ENCODE measurements at regions of chr18 and their contacts with region 1.

Region 1: DNA sequence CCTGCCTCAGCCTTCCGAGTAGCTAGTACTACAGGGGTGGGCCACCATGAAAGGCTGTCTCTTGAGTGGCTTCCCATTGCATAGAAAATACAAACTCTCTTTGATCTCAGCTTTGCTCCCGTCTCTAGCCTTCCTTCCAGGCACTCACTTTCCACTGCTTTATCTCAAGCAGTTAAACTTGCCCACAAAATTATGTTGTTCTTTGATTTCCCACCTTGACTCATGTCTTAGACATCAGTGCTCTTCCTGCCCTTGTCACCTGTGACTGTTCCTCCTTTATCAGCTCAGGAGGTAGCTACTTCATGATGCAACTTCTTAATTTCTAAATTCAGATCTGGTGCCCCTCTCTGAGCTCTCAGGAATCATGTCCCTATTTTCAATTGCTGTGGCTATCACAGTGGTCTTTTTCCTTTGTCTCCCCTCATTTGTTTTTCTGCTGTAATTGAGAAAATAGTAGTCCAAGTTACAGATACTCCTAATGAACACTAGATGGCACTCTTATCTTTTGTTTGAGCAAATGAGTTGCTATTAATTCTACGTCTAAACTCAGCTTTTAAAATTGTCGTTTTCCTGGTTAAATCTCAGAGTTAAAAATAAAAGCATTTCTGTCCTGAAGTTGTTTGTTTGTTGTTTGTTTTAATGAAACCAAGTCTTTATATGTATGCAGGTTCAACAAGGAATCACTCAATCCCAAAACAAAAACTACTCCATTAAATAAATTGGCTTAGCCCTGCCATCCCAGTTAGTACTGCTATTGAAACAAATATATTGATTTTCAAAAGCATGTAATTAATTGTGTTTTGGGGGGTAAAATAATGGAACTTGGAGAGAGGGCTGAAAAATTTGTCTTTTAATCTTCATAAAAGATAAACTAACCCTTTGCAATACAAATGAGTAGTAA is 46.9 kb upstream of the GREB1L start:
- DNase-seq: no peak
- ATAC-seq: no peak
- H3K4me3 Mint-ChIP-seq: no peak overlapping the region
- H3K27ac Mint-ChIP-seq: no peak overlapping the region
- H3K4me1 Mint-ChIP-seq: no peaks in the 10 kb centered on the region
- H3K27me3 Mint-ChIP-seq: peaks cover 7% of the 10 kb centered on the region

Region 2: GRCh38 chr18:21179590-21180220 is 15.4 kb before region 1 on chr18:
- CTCF ChIA-PET with region 1: interaction called, 18 read pairs
- POLR2A ChIA-PET with region 1: no interaction called
- DNase-seq: peak; percentile 67
- ATAC-seq: peak; percentile 67
- H3K4me3 Mint-ChIP-seq: no peak overlapping the region
- H3K27ac Mint-ChIP-seq: no peak overlapping the region
- H3K4me1 Mint-ChIP-seq: peaks cover 7% of the 10 kb centered on the region
- H3K27me3 Mint-ChIP-seq: no peaks in the 10 kb centered on the region

Region 3: GRCh38 chr18:21444465-21445023 is 249.4 kb after region 1 on chr18:
- CTCF ChIA-PET with region 1: interaction called, 14 read pairs
- POLR2A ChIA-PET with region 1: no interaction called
- DNase-seq: no peak
- ATAC-seq: no peak
- H3K4me3 Mint-ChIP-seq: no peak overlapping the region
- H3K27ac Mint-ChIP-seq: no peak overlapping the region
- H3K4me1 Mint-ChIP-seq: no peaks in the 10 kb centered on the region
- H3K27me3 Mint-ChIP-seq: peaks cover 18% of the 10 kb centered on the region